MCF 10A (cell line): ENCODE measurements at regions of chr7 and their contacts with region 1.

Region 1: DNA sequence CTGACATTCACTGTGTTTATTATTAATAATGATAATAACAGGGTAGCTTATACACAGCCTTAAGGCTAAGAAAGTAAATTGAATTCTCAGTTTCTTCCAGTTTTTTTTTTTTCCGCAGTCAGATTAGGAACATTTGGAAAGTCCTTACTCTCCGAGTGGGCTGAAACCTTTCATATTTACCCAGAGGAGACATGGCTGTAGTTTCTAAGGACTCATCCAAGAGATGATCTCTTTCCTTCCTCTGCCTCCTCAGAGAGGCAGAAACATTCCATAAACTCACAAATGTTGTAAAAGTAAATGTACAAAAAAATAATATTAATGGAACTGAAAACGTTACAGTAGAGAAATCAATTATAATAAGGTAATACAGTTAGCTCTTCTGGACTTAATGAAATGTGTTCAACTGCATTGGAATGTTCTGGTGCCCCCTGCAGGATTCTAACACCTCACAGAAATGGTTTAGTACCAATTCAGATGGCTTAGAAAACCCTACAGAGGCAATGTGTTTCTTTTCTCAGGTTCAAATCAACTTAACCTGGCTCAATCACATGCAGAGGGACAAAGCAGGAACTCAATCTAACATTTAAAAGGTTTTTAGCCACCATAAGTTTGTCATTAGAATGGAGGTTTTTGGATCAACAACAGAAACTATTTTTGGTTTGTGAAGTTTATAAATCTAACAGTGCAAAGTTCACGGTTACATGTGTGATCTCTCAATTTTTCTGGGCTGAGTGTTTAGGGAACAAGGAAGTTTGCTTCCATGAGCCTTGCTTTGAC is 71.7 kb downstream of the ICA1 start:
- DNase-seq: peak; percentile 59
- H3K4me3 Mint-ChIP-seq: no peak overlapping the region
- H3K27ac Mint-ChIP-seq: no peak overlapping the region
- H3K4me1 Mint-ChIP-seq: no peaks in the 10 kb centered on the region
- H3K27me3 Mint-ChIP-seq: no peaks in the 10 kb centered on the region
- CTCF ChIP-seq: peak; percentile 39

Region 2: DNA sequence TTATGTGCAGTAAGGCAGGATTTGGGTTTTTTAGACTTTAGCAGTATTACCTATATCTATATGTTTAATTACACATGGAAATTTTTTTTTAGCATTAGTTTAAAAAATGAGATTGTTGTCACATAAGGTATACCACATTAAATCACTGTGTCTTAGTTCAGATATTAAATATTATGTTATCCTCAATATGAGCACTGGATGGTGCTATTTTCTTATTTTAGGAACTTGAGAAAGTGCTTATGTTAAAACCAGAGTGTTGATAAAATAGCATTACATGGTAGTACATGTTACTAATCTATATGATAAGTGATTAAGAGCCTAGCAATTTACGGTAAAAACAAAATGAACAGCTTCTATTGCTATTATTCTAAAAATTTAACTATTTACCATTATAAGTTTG is 594.9 kb before region 1 on chr7:
- CTCF ChIA-PET with region 1: interaction called, 6 read pairs
- POLR2A ChIA-PET with region 1: interaction called, 3 read pairs
- intact Hi-C with region 1: loop called (anchors 1 kb)
- DNase-seq: peak; percentile 26
- H3K4me3 Mint-ChIP-seq: no peak overlapping the region
- H3K27ac Mint-ChIP-seq: no peak overlapping the region
- H3K4me1 Mint-ChIP-seq: peaks cover 5% of the 10 kb centered on the region
- H3K27me3 Mint-ChIP-seq: no peaks in the 10 kb centered on the region
- CTCF ChIP-seq: peak; percentile 28

Region 3: DNA sequence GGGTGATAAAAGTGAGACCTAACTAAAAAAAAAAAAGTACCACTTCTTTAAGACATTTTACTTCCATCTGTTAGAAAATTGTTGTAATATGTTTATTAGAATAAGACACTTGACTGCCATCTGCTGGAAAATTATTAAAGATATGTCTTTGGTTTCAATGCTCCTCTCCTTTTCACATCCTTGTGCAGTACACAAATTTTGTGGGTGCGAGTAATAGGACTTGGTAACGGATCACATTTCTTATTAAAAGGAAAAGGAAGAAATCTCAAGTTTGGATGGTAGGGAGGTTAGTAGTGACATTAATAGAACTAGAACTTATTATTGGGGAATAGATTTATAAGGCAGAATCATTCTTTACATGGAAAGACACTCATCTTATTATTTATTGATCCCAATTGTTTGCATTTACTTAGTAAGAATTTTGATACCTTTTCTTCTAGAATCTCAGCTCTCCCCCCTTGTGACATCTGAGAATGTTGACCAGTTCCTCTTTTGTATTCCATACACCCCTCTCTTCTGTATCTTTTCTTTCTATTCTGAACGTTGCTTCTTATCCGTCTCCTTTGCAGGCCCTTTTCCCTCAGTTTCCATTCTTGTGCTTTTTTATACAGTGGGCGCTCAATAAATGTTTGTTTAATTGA is 428.8 kb before region 1 on chr7:
- CTCF ChIA-PET with region 1: interaction called, 11 read pairs
- POLR2A ChIA-PET with region 1: interaction called, 3 read pairs
- intact Hi-C with region 1: loop called (anchors 1 kb)
- DNase-seq: peak; percentile 64
- H3K4me3 Mint-ChIP-seq: peak overlapping the region; percentile 87
- H3K27ac Mint-ChIP-seq: peak overlapping the region; percentile 95
- H3K4me1 Mint-ChIP-seq: peaks cover 33% of the 10 kb centered on the region
- H3K27me3 Mint-ChIP-seq: no peaks in the 10 kb centered on the region
- CTCF ChIP-seq: peak; percentile 30

Region 4: DNA sequence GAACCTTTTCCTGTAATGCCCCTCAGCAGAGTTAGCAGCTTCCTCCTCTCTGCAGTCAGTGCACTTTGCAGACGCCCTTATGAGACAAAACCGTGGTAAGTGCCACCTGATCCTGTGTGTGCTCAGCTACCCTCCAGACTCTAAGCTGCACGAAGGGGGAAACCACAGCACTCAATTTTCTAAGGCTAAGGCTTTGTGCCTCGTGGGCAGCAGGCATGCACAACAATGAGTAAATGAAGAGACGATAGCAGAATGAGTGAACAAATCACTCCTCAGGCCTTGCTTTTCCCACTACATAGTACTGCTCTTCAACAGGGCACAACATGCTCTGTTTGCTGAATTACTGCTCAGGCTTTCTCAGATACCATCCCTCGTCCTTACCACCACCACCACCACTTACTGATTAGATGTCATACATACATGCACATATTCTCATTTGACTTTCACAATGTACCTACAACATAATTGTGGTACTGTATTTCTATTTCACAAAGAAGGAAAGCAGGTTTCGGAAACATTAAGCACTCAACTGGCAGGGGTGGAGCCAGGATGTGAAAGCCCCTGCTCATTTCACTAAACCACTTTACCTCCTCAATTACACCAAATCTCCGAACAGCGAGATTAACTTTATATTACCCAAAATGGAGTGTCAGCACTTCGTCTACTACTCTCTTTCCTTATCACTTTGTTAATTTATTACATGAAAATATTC is 13.8 kb before region 1 on chr7:
- CTCF ChIA-PET with region 1: interaction called, 11 read pairs
- POLR2A ChIA-PET with region 1: no interaction called
- intact Hi-C with region 1: no loop called
- DNase-seq: no peak
- H3K4me3 Mint-ChIP-seq: no peak overlapping the region
- H3K27ac Mint-ChIP-seq: no peak overlapping the region
- H3K4me1 Mint-ChIP-seq: no peaks in the 10 kb centered on the region
- H3K27me3 Mint-ChIP-seq: no peaks in the 10 kb centered on the region
- CTCF ChIP-seq: no peak

Region 5: GRCh38 chr7:8201846-8202441 is 11.6 kb after region 1 on chr7:
- CTCF ChIA-PET with region 1: interaction called, 13 read pairs
- POLR2A ChIA-PET with region 1: no interaction called
- intact Hi-C with region 1: no loop called
- DNase-seq: peak; percentile 27
- H3K4me3 Mint-ChIP-seq: no peak overlapping the region
- H3K27ac Mint-ChIP-seq: peak overlapping the region; percentile 51
- H3K4me1 Mint-ChIP-seq: peaks cover 15% of the 10 kb centered on the region
- H3K27me3 Mint-ChIP-seq: no peaks in the 10 kb centered on the region
- CTCF ChIP-seq: no peak

Region 6: GRCh38 chr7:8208816-8209215 is 18.5 kb after region 1 on chr7:
- CTCF ChIA-PET with region 1: interaction called, 11 read pairs
- POLR2A ChIA-PET with region 1: no interaction called
- intact Hi-C with region 1: no loop called
- DNase-seq: no peak
- H3K4me3 Mint-ChIP-seq: no peak overlapping the region
- H3K27ac Mint-ChIP-seq: no peak overlapping the region
- H3K4me1 Mint-ChIP-seq: no peaks in the 10 kb centered on the region
- H3K27me3 Mint-ChIP-seq: no peaks in the 10 kb centered on the region
- CTCF ChIP-seq: no peak